Naive thymus-derived CD4-positive, alpha-beta T cell (primary cell): ENCODE measurements at regions of chr9 and their contacts with region 1.

Region 1: DNA sequence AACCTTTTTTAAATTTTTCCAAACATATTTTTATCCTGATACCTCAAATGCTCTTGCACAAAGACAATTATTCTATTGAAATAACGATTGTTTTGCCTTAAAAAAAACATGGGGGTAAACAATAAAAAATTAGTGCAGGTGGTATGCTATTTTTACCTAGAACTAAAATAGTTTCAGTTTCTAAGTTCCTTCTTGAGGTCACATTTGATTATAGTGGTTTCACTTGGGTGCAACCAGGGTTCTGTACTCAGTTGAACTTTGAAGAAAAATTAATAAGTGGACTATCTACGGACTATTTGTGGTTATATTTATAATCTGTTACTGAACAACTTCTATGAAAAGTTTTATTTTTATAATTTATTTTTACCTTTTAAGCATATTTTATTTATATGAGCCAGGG is 387.1 kb upstream of the IZUMO3 start:
- DNase-seq: no peak
- ATAC-seq: no peak
- H3K4me3 ChIP-seq: no peak overlapping the region
- H3K4me3 Mint-ChIP-seq: no peak overlapping the region
- H3K27ac ChIP-seq: no peak overlapping the region
- H3K27ac Mint-ChIP-seq: no peak overlapping the region
- H3K4me1 ChIP-seq: no peaks in the 10 kb centered on the region
- H3K4me1 Mint-ChIP-seq: no peaks in the 10 kb centered on the region
- H3K27me3 ChIP-seq: no peaks in the 10 kb centered on the region
- H3K27me3 Mint-ChIP-seq: no peaks in the 10 kb centered on the region

Region 2: GRCh38 chr9:24793787-24794186 is 139.0 kb before region 1 on chr9:
- CTCF ChIA-PET with region 1: no interaction called
- POLR2A ChIA-PET with region 1: no interaction called
- intact Hi-C with region 1: no loop called
- DNase-seq: no peak
- ATAC-seq: no peak
- H3K4me3 ChIP-seq: no peak overlapping the region
- H3K4me3 Mint-ChIP-seq: no peak overlapping the region
- H3K27ac ChIP-seq: no peak overlapping the region
- H3K27ac Mint-ChIP-seq: no peak overlapping the region
- H3K4me1 ChIP-seq: no peaks in the 10 kb centered on the region
- H3K4me1 Mint-ChIP-seq: no peaks in the 10 kb centered on the region
- H3K27me3 ChIP-seq: no peaks in the 10 kb centered on the region
- H3K27me3 Mint-ChIP-seq: no peaks in the 10 kb centered on the region

Region 3: GRCh38 chr9:24879591-24879990 is 53.2 kb before region 1 on chr9:
- CTCF ChIA-PET with region 1: no interaction called
- POLR2A ChIA-PET with region 1: no interaction called
- intact Hi-C with region 1: loop called in 1 of 2 experiments (anchors 10 kb)
- DNase-seq: no peak
- ATAC-seq: no peak
- H3K4me3 ChIP-seq: no peak overlapping the region
- H3K4me3 Mint-ChIP-seq: no peak overlapping the region
- H3K27ac ChIP-seq: no peak overlapping the region
- H3K27ac Mint-ChIP-seq: no peak overlapping the region
- H3K4me1 ChIP-seq: no peaks in the 10 kb centered on the region
- H3K4me1 Mint-ChIP-seq: no peaks in the 10 kb centered on the region
- H3K27me3 ChIP-seq: no peaks in the 10 kb centered on the region
- H3K27me3 Mint-ChIP-seq: no peaks in the 10 kb centered on the region